PC-3 (cell line): ENCODE measurements at regions of chr7 and their contacts with region 1.

Region 1: DNA sequence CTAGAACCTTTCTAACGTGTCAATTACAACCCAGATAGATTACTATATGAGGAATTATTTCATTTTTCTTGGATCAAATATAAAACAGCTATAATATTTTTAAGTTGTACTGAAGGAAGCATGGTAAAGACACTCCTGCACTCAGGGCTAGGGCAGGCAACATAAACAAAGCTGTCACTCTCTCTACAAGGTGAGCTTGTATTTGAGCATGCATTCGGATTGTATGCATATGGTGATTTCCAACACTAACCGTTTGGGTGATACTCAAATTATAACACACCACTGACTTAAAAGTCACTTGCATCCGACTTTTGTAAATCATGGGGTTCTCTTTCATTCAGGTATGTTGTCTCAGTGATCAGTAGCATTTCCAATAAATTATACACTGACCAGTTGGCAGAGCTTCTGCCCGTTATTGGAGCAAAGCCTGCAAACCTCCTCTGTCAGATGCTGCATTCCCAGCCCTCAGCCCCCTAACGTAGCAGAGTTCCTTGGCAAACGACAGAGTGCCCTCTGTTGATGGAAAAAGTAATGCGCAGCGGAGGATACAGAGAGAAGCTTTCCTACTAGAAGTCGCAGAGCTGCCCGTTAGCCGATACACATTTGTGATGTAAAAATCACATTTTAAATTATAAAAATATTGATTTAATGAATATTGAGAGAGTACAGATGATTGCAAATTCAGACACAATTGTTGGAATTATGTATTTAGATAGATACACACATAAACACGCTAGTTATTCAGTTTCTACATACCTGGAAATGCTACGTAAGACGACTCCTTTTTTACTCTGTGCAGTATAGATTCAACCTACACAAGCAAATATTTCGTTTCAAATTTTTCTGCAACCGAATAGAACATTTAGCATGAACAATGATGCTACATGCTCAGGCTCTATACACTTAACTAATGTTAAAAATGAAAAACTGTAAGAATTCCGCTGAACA is 173.9 kb upstream of the SP4 start:
- DNase-seq: peak; percentile 79
- ATAC-seq: peak; percentile 84
- H3K4me3 ChIP-seq: no peak overlapping the region
- H3K27ac ChIP-seq: no peak overlapping the region
- H3K4me1 ChIP-seq: no peaks in the 10 kb centered on the region
- H3K27me3 ChIP-seq: peaks cover 66% of the 10 kb centered on the region
- CTCF ChIP-seq: peak; percentile 79

Region 2: DNA sequence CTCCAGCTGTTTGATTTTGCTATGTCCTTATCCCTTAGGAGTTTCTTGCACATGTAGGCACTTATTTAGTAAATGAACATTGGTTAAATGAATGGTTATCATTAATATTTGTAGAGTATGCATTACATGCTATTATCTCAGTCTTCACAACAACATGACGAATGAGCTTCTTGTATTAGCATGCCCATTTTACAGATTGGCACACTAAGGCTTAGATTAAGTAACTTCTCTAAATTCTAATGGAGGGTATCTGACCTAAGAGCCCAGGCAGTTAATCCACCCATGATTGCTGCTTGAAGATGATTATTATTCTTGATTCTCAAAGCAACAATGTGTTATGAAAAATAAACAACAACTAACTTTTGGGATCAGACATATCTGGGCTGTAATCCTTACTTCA is 500.0 kb before region 1 on chr7:
- CTCF ChIA-PET with region 1: no interaction called
- POLR2A ChIA-PET with region 1: no interaction called
- intact Hi-C with region 1: no loop called
- DNase-seq: no peak
- ATAC-seq: no peak
- H3K4me3 ChIP-seq: no peak overlapping the region
- H3K27ac ChIP-seq: no peak overlapping the region
- H3K4me1 ChIP-seq: no peaks in the 10 kb centered on the region
- H3K27me3 ChIP-seq: peaks cover 52% of the 10 kb centered on the region
- CTCF ChIP-seq: no peak

Region 3: DNA sequence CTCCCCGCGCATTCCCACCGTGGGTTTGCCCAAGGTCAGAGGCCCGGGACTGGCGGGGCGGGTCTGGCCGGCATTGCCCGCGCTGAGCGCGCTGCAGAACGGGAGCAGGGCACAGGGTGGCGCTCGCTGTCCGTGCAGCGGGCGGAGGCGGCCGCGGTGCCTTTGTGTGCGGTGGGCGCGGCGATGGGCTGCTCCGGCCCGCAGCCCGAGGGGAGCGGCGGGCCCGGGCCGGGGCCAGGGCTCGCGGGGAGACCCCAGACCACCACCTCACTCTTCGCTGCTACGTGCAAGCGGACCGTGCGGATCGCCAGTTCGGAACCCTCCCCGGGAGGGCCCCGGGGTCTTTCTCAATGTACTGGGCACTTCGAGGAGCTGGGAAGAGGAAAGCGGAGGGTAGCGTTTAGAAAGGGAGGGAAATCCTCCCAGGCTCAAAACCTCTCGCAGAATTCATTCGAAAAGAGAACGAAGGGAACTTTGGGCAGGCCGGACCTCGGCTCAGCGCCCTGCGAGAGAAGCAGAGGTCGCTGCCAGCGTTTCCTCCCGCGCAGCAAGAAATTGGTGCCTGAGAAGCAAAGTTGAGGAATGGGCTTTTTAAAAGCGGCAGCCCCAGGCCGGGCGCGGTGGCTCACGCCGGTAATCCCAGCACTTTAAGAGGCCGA is 475.8 kb before region 1 on chr7:
- CTCF ChIA-PET with region 1: interaction called, 3 read pairs
- POLR2A ChIA-PET with region 1: no interaction called
- intact Hi-C with region 1: loop called (anchors 2 kb)
- DNase-seq: peak; percentile 49
- ATAC-seq: peak; percentile 97
- H3K4me3 ChIP-seq: peak overlapping the region; percentile 58; the same call in 1 of the 2 replicates
- H3K27ac ChIP-seq: no peak overlapping the region
- H3K4me1 ChIP-seq: no peaks in the 10 kb centered on the region
- H3K27me3 ChIP-seq: peaks cover 88% of the 10 kb centered on the region
- CTCF ChIP-seq: peak; percentile 69

Region 4: GRCh38 chr7:20991544-20991943 is 262.5 kb before region 1 on chr7:
- CTCF ChIA-PET with region 1: interaction called, 3 read pairs
- POLR2A ChIA-PET with region 1: no interaction called
- intact Hi-C with region 1: loop called (anchors 2 kb)
- DNase-seq: peak; percentile 28
- ATAC-seq: peak; percentile 35; the same call in 1 of the 2 replicates
- H3K4me3 ChIP-seq: no peak overlapping the region
- H3K27ac ChIP-seq: no peak overlapping the region
- H3K4me1 ChIP-seq: no peaks in the 10 kb centered on the region
- H3K27me3 ChIP-seq: peaks cover 25% of the 10 kb centered on the region
- CTCF ChIP-seq: peak; percentile 60

Region 5: DNA sequence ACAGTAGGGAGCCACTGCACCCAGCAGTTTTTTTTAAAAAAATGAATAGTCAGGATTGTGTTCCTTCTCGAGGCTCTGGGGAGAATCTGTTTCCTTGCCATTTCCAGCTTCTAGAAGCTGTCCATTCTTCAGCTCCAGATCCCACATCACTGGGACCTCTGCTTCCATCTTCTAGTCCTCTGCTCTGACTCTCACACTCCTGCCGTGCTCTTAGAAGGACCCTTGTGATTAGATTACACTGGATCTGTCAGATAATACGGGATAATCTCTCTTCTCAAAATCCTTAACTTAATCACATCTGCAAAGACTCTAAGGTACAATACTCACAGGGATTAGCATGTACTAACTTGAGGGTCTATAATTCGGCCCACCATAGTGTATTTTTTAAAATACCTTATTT is 15.0 kb after region 1 on chr7:
- CTCF ChIA-PET with region 1: no interaction called
- POLR2A ChIA-PET with region 1: no interaction called
- intact Hi-C with region 1: no loop called
- DNase-seq: no peak
- ATAC-seq: no peak
- H3K4me3 ChIP-seq: no peak overlapping the region
- H3K27ac ChIP-seq: no peak overlapping the region
- H3K4me1 ChIP-seq: no peaks in the 10 kb centered on the region
- H3K27me3 ChIP-seq: peaks cover 24% of the 10 kb centered on the region
- CTCF ChIP-seq: no peak

Region 6: GRCh38 chr7:21305455-21306235 is 51.6 kb after region 1 on chr7:
- CTCF ChIA-PET with region 1: no interaction called
- POLR2A ChIA-PET with region 1: no interaction called
- intact Hi-C with region 1: no loop called
- DNase-seq: peak; percentile 27
- ATAC-seq: no peak
- H3K4me3 ChIP-seq: no peak overlapping the region
- H3K27ac ChIP-seq: no peak overlapping the region
- H3K4me1 ChIP-seq: no peaks in the 10 kb centered on the region
- H3K27me3 ChIP-seq: 0 out of 2 replicates have a peak, but pooled peaks cover 3% of the 10 kb centered on the region
- CTCF ChIP-seq: no peak

Region 7: DNA sequence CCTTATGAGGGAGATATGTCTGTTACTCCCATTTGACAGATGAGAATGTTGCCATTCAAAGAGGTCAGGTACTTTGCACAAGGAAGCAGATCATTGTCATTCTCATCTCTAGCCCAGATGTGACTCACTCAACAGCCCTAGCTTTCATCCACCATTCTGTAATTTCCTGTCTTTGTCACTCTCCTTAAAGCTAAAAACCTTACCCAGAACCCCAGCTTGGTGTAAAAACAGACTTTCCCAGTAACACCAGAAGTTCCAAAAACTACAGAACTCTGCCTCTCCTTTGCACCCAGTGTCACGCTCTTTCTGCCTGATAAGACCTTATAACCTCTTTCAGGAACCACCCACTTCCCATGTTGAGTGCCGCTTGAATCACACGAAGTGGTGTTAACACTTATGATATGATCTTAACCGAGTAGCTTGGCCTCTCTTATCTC is 84.7 kb after region 1 on chr7:
- CTCF ChIA-PET with region 1: no interaction called
- POLR2A ChIA-PET with region 1: no interaction called
- intact Hi-C with region 1: no loop called
- DNase-seq: peak; percentile 5
- ATAC-seq: no peak
- H3K4me3 ChIP-seq: no peak overlapping the region
- H3K27ac ChIP-seq: no peak overlapping the region
- H3K4me1 ChIP-seq: no peaks in the 10 kb centered on the region
- H3K27me3 ChIP-seq: peaks cover 24% of the 10 kb centered on the region
- CTCF ChIP-seq: no peak

Region 8: DNA sequence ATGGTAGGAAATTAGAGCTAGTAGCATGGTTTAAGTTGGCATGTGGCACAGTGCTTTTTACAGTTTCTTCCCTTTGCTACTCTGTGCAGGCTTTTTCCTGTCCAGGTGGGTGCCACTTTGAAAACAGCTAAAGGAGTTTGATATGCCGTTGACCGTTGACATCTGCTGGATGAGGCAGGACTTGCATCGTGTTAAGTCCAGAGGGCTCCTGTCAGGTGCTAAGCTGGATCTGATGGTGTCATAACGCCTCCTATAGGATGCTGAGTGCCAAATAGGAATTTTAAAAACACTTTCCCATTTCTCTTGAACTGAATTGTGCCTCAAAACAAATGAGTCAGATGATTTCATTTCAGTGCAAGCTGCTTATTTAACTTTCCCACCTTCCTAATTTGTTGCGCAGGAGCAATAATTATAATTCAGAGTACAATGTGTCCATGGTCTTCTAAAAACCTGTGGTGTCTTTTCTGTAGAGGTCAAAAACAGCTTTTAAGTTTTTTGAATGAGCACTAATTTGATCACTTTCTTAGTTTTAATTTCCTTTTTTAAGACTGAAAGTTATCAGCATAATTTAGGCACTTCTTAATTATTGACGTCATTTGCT is 513.4 kb after region 1 on chr7:
- CTCF ChIA-PET with region 1: interaction called, 4 read pairs
- POLR2A ChIA-PET with region 1: no interaction called
- intact Hi-C with region 1: loop called (anchors 1 kb)
- DNase-seq: peak; percentile 83
- ATAC-seq: peak; percentile 99
- H3K4me3 ChIP-seq: no peak overlapping the region
- H3K27ac ChIP-seq: no peak overlapping the region
- H3K4me1 ChIP-seq: no peaks in the 10 kb centered on the region
- H3K27me3 ChIP-seq: peaks cover 24% of the 10 kb centered on the region
- CTCF ChIP-seq: peak; percentile 90

Region 9: GRCh38 chr7:22082886-22083703 is 829.1 kb after region 1 on chr7:
- CTCF ChIA-PET with region 1: interaction called, 3 read pairs
- POLR2A ChIA-PET with region 1: no interaction called
- intact Hi-C with region 1: loop called (anchors 1 kb)
- DNase-seq: peak; percentile 79
- ATAC-seq: peak; percentile 95
- H3K4me3 ChIP-seq: peak overlapping the region; percentile 77
- H3K27ac ChIP-seq: no peak overlapping the region
- H3K4me1 ChIP-seq: peaks cover 11% of the 10 kb centered on the region; the same call in 1 of the 2 replicates
- H3K27me3 ChIP-seq: peaks cover 12% of the 10 kb centered on the region
- CTCF ChIP-seq: peak; percentile 89